ENCODE measurements at regions of chr17 and their contacts with region 1.

Region 1: GRCh38 chr17:75764711-75765421 is at the start of gene GALK1:
- DNase-seq: peak; percentile 82
- H3K4me3 Mint-ChIP-seq: peak within 1 kb of the TSS; percentile 77
- H3K27ac Mint-ChIP-seq: peak within 1 kb of the TSS; percentile 49
- H3K4me1 Mint-ChIP-seq: peaks cover 19% of the 10 kb centered on the region
- H3K27me3 Mint-ChIP-seq: peaks cover 4% of the 10 kb centered on the region
- total RNA-seq, gene GALK1: 40.0 to 40.6 TPM

Region 2: GRCh38 chr17:75827252-75828115 is 62.6 kb after region 1 on chr17:
- CTCF ChIA-PET with region 1: interaction called, 23 read pairs
- POLR2A ChIA-PET with region 1: interaction called, 11 read pairs
- DNase-seq: peak; percentile 70
- H3K4me3 Mint-ChIP-seq: peak overlapping the region; percentile 35
- H3K27ac Mint-ChIP-seq: peak overlapping the region; percentile 93
- H3K4me1 Mint-ChIP-seq: peaks cover 26% of the 10 kb centered on the region
- H3K27me3 Mint-ChIP-seq: no peaks in the 10 kb centered on the region

Region 3: GRCh38 chr17:75896415-75897159 is 131.7 kb after region 1 on chr17 and contains the start of gene TRIM65:
- CTCF ChIA-PET with region 1: interaction called, 11 read pairs
- POLR2A ChIA-PET with region 1: interaction called, 3 read pairs
- DNase-seq: peak; percentile 83
- H3K4me3 Mint-ChIP-seq: peak within 1 kb of the TSS; percentile 81
- H3K27ac Mint-ChIP-seq: peak within 1 kb of the TSS; percentile 74
- H3K4me1 Mint-ChIP-seq: peaks cover 24% of the 10 kb centered on the region
- H3K27me3 Mint-ChIP-seq: no peaks in the 10 kb centered on the region
- total RNA-seq, gene TRIM65: 24.9 to 26.1 TPM